Left lung (tissue), 14 donors: ENCODE measurements at regions of chr11 and their contacts with region 1.

Region 1: GRCh38 chr11:122853971-122854446 is 15.7 kb downstream of the CRTAM start:
- DNase-seq: peak in 2 of 4 donors; percentile 72 to 84
- ATAC-seq: peak; percentile 78
- H3K4me3 ChIP-seq: no peak overlapping the region
- H3K27ac ChIP-seq: no peak overlapping the region
- H3K4me1 ChIP-seq: peaks cover 0 to 12% of the 10 kb centered on the region in 2 donors
- H3K27me3 ChIP-seq: no peaks in the 10 kb centered on the region
- CTCF ChIP-seq: peak; percentile 51 to 71

Region 2: DNA sequence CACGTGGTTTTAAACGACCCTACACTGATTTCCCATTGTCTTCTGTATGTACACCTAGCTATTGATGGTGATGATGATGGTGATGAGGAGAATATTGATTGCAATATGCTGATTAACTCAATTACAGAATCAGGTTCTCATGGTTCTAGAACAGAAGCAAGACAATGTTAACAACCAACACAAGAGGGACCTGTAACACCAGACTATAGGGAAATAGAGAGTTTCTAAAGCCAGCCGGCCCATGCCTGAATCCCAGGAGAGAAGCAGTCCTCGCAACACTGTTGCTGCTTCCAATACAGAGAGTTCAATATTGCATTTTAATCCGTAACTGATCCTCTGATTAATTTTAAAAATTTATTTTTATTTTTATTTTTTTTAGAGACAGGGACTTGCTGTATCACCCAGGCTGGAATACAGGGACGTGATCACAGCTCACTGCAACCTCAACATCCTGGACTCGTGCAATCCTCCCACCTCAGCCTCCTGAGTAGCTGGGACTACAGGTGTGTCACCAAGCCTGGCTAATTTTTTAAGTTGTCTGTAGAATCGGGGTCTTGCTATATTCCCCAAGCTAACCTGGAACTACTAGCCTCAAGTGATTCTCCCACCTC is 220.7 kb before region 1 on chr11:
- intact Hi-C with region 1: loop called in 1 of 2 experiments (anchors 5 kb)
- DNase-seq: peak in 2 of 4 donors; percentile 16 to 51
- ATAC-seq: peak; percentile 66
- H3K4me3 ChIP-seq: no peak overlapping the region
- H3K27ac ChIP-seq: no peak overlapping the region
- H3K4me1 ChIP-seq: no peaks in the 10 kb centered on the region
- H3K27me3 ChIP-seq: no peaks in the 10 kb centered on the region
- CTCF ChIP-seq: peak; percentile 9 to 39

Region 3: GRCh38 chr11:122784325-122784955 is 69.6 kb before region 1 on chr11:
- intact Hi-C with region 1: no loop called
- DNase-seq: peak in 2 of 4 donors; percentile 28 to 39
- ATAC-seq: peak; percentile 30
- H3K4me3 ChIP-seq: no peak overlapping the region
- H3K27ac ChIP-seq: peak overlapping the region in 1 of 2 donors; percentile 22
- H3K4me1 ChIP-seq: peaks cover 0 to 23% of the 10 kb centered on the region in 2 donors
- H3K27me3 ChIP-seq: no peaks in the 10 kb centered on the region
- CTCF ChIP-seq: no peak

Region 4: GRCh38 chr11:122796128-122796717 is 57.8 kb before region 1 on chr11:
- intact Hi-C with region 1: loop called in 1 of 2 experiments (anchors 5 kb)
- DNase-seq: peak in 1 of 4 donors; percentile 73
- ATAC-seq: peak; percentile 84
- H3K4me3 ChIP-seq: no peak overlapping the region
- H3K27ac ChIP-seq: no peak overlapping the region
- H3K4me1 ChIP-seq: peaks cover 0 to 6% of the 10 kb centered on the region in 2 donors
- H3K27me3 ChIP-seq: no peaks in the 10 kb centered on the region
- CTCF ChIP-seq: peak; percentile 77 to 88